Endothelial cell of umbilical vein (primary cell): ENCODE measurements at regions of chr4 and their contacts with region 1.

Region 1: GRCh38 chr4:121370729-121371325 is 10.0 kb downstream of the QRFPR start:
- DNase-seq: peak; percentile 53
- H3K4me3 ChIP-seq: no peak overlapping the region
- H3K27ac ChIP-seq: no peak overlapping the region
- H3K4me1 ChIP-seq: no peaks in the 10 kb centered on the region
- H3K27me3 ChIP-seq: peaks cover 0 to 7% of the 10 kb centered on the region in 2 experiments
- CTCF ChIP-seq: peak; percentile 22 to 35
- POLR2A ChIP-seq: no peak

Region 2: DNA sequence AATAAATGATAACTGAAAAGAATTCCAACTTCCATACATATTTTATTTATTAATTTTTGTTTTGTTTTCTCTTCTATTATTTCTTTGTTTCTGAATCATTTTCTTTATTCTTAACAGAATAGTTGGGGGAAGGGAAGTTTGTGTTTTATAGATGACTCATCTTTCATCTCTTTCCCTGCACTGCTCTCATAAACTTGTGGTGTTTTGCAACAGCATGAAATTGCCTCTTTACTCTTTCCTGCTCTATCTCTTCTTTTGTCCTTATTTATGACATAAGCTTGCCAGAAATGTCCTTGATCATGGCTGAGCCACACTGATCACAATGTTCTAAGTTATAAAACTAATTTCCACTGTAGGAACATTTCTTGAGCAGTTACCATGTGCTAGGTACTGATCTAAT is 12.4 kb before region 1 on chr4:
- CTCF ChIA-PET with region 1: interaction called, 19 read pairs
- POLR2A ChIA-PET with region 1: no interaction called
- dilution Hi-C with region 1: no loop called
- intact Hi-C with region 1: no loop called
- DNase-seq: no peak
- H3K4me3 ChIP-seq: no peak overlapping the region
- H3K27ac ChIP-seq: no peak overlapping the region
- H3K4me1 ChIP-seq: no peaks in the 10 kb centered on the region
- H3K27me3 ChIP-seq: no peaks in the 10 kb centered on the region
- CTCF ChIP-seq: no peak
- POLR2A ChIP-seq: no peak

Region 3: DNA sequence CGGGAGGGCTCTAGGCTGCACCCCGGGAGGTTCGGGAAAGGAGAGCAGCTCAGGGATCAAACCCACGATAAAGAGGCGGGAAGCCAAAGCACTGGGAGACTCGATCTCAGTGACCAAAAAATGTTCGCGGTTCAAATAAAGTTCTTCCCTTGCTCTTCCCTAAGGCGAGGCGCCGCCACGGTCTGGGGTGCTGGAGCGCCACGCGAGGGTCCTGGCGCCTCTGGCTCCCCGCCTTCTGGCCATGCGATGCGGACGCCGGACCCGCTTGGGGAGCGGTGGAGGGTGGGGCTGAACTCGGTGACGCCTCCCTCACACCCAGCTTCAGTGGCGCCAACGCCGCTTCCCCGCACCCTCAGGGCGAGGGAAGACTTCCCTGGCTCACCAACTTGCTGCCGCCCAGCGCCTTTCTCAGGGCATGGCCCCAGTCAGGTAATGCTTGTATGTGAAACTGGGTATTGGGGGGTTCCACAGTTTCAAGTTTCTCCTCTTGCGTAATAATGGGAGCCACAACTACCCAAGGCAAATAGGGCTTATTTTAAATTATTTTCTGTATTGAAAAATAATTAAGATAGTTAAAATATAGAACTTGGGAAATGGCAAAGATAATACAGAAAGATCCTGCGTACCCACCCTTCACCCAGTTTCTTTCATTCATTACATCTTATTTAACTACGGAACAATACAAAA is 10.1 kb after region 1 on chr4 and contains the start of gene QRFPR:
- CTCF ChIA-PET with region 1: interaction called, 28 read pairs
- POLR2A ChIA-PET with region 1: no interaction called
- dilution Hi-C with region 1: no loop called
- intact Hi-C with region 1: no loop called
- DNase-seq: no peak
- H3K4me3 ChIP-seq: no peak within 1 kb of the TSS
- H3K27ac ChIP-seq: no peak within 1 kb of the TSS
- H3K4me1 ChIP-seq: no peaks in the 10 kb centered on the region
- H3K27me3 ChIP-seq: peaks cover 20 to 39% of the 10 kb centered on the region in 2 experiments
- CTCF ChIP-seq: no peak
- POLR2A ChIP-seq: no peak
- total RNA-seq, gene QRFPR: not detected in 2 replicates

Region 4: DNA sequence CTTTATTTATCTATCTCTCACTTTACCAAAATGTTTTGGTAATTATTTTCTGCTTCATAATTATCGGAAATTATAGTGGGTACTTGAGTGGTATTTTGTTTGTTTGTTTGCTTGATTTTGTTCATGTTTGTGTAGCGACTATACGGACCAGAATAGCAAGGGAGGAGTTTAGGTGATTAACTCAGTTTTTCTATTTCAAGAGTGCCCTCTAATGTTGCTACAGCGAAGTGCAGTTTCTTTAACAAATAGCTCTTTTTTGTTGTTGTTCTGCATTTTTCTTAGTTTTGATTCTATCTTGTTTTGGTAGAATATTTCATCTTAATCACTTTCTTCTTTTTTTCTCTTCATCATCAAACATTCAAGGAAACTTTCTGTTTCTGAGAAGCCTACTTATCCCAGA is 50.8 kb after region 1 on chr4:
- CTCF ChIA-PET with region 1: interaction called, 11 read pairs
- POLR2A ChIA-PET with region 1: no interaction called
- dilution Hi-C with region 1: no loop called
- intact Hi-C with region 1: no loop called
- DNase-seq: no peak
- H3K4me3 ChIP-seq: no peak overlapping the region
- H3K27ac ChIP-seq: no peak overlapping the region
- H3K4me1 ChIP-seq: no peaks in the 10 kb centered on the region
- H3K27me3 ChIP-seq: peaks cover 0 to 2% of the 10 kb centered on the region in 2 experiments
- CTCF ChIP-seq: no peak
- POLR2A ChIP-seq: no peak

Region 5: GRCh38 chr4:121656269-121656641 is 285.4 kb after region 1 on chr4:
- CTCF ChIA-PET with region 1: interaction called, 65 read pairs
- POLR2A ChIA-PET with region 1: no interaction called
- dilution Hi-C with region 1: no loop called
- intact Hi-C with region 1: loop called (anchors 1 kb)
- DNase-seq: peak; percentile 66
- H3K4me3 ChIP-seq: no peak overlapping the region
- H3K27ac ChIP-seq: no peak overlapping the region
- H3K4me1 ChIP-seq: no peaks in the 10 kb centered on the region
- H3K27me3 ChIP-seq: no peaks in the 10 kb centered on the region
- CTCF ChIP-seq: peak; percentile 30 to 56
- POLR2A ChIP-seq: no peak

Region 6: DNA sequence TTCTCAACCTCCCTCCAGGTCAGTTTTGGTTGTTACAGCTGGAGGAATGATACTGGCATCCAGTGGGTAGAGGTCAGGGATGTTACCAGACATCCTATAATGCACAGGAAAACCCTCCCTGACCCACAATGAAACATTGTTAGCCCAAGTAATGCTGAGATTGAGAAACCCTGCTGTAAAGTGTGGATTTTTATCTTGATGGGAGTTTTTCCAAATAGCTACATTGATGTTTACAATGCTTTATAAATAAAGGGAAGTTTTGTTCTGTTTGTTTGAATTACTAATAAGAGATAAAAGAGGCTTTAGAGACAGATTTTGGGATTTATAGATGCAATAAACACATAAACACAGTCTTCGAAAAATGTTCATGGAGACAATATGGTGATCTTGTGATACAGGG is 1745.6 kb after region 1 on chr4:
- CTCF ChIA-PET with region 1: no interaction called
- POLR2A ChIA-PET with region 1: no interaction called
- dilution Hi-C with region 1: no loop called
- intact Hi-C with region 1: no loop called
- DNase-seq: peak; percentile 59
- H3K4me3 ChIP-seq: no peak overlapping the region
- H3K27ac ChIP-seq: no peak overlapping the region
- H3K4me1 ChIP-seq: peaks cover 15% of the 10 kb centered on the region
- H3K27me3 ChIP-seq: no peaks in the 10 kb centered on the region
- CTCF ChIP-seq: no peak
- POLR2A ChIP-seq: no peak